CD14-positive monocyte (primary cell): ENCODE measurements at regions of chr22 and their contacts with region 1.

Region 1: DNA sequence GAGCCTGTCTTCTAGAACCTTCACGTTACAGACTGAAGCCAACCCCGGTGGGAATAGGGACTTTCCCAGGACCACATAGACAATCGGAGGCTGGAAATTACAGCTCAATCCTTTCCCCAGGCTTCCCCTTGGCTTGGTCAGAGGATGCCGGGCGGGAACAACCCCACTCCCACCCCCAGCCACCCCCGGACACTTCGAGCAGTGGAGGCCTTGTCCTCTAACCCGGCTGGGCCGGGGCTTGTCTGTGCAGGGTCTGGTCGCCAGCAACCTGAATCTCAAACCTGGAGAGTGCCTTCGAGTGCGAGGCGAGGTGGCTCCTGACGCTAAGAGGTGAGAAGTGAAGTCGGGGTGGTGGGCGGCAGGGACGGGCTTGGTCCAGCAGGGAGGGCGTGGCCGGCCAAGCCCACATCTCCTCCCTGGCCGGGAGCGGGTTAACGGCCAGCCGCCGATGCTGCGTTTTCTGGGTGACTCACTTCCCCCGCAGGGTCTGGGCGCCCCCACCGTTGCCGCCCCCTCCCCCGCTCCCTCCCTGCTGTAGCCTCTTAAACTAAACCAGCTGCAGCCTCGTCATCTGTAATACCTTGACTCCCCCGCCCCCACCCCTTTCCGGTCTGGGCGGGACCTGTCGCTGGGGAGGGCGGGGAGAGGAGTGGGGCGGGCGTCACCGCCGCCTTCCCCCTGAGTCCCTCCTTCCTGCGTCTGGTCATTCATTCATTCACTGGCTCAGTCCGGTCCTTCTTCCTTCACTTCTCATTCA is 1.5 kb downstream of the LGALS1 start:
- DNase-seq: peak; percentile 92 to 95 (median 94)
- H3K4me3 ChIP-seq: peak overlapping the region; percentile 62 to 98 (median 76)
- H3K4me3 Mint-ChIP-seq: peak overlapping the region; percentile 78 to 96
- H3K27ac ChIP-seq: peak overlapping the region; percentile 80 to 91
- H3K27ac Mint-ChIP-seq: peak overlapping the region; percentile 91 to 99 (median 95)
- H3K4me1 ChIP-seq: peaks cover 68 to 77% of the 10 kb centered on the region in 2 donors
- H3K4me1 Mint-ChIP-seq: peaks cover 53% of the 10 kb centered on the region
- H3K27me3 ChIP-seq: no peaks in the 10 kb centered on the region
- H3K27me3 Mint-ChIP-seq: peaks cover 0 to 2% (median 0%) of the 10 kb centered on the region in 3 donors
- CTCF ChIP-seq: no peak

Region 2: GRCh38 chr22:37098976-37099591 is 577.8 kb before region 1 on chr22:
- intact Hi-C with region 1: no loop called
- DNase-seq: no peak
- H3K4me3 ChIP-seq: no peak overlapping the region
- H3K4me3 Mint-ChIP-seq: no peak overlapping the region
- H3K27ac ChIP-seq: no peak overlapping the region
- H3K27ac Mint-ChIP-seq: peak overlapping the region in 1 of 7 donors; percentile 52
- H3K4me1 ChIP-seq: no peaks in the 10 kb centered on the region
- H3K4me1 Mint-ChIP-seq: no peaks in the 10 kb centered on the region
- H3K27me3 ChIP-seq: peaks cover 0 to 2% of the 10 kb centered on the region in 2 donors
- H3K27me3 Mint-ChIP-seq: peaks cover 7 to 38% (median 18%) of the 10 kb centered on the region in 3 donors
- CTCF ChIP-seq: no peak

Region 3: GRCh38 chr22:37300551-37301017 is 376.3 kb before region 1 on chr22:
- intact Hi-C with region 1: no loop called
- DNase-seq: peak; percentile 71 to 77 (median 75)
- H3K4me3 ChIP-seq: peak overlapping the region in 1 of 3 experiments; percentile 38
- H3K4me3 Mint-ChIP-seq: peak overlapping the region; percentile 24 to 70
- H3K27ac ChIP-seq: peak overlapping the region; percentile 73 to 96
- H3K27ac Mint-ChIP-seq: peak overlapping the region; percentile 91 to 99 (median 97)
- H3K4me1 ChIP-seq: peaks cover 100% of the 10 kb centered on the region in 2 donors
- H3K4me1 Mint-ChIP-seq: peaks cover 94% of the 10 kb centered on the region
- H3K27me3 ChIP-seq: no peaks in the 10 kb centered on the region
- H3K27me3 Mint-ChIP-seq: peaks cover 0 to 4% (median 2%) of the 10 kb centered on the region in 3 donors
- CTCF ChIP-seq: no peak

Region 4: DNA sequence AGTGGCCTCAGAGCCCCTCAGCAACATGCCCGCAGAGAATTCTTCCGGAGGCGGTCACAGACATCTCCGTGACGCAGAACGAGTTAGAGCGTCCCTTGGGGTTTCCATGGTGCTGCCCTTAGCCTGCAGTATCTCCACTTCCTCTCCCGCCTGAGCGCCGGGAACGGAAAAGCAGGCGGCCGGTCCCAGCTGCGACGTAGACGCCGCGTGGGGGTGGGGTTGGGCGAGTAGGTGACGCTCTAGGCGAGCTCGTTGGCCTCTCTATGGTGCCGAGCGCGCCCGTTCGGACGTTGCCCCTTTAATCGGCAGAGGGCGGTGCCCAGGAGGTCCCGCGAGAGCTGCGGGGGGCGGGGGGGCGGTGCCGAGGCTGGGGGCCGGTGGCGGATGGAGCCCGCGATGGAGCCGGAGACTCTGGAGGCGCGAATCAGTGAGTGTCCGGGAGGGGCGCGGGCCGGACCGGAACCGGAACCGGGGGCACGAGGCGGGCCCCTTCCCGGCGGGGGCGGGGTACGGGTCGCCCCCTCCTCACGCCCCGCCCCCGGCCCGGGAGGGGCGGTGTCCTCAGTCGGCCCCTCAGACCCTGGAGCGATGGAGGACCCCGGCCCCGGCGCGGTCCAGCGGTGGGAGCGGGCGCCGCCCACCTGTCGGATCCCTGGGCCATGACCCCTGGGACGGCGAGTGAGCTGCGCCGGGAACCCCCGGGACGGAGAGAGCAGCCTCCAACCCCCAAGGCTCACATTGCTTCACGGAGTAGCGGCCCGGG is 68.3 kb before region 1 on chr22 and contains the start of gene GGA1:
- intact Hi-C with region 1: loop called in 1 of 2 experiments (anchors 2 kb)
- DNase-seq: peak; percentile 100
- H3K4me3 ChIP-seq: peak within 1 kb of the TSS; percentile 60 to 81 (median 68)
- H3K4me3 Mint-ChIP-seq: peak within 1 kb of the TSS; percentile 97
- H3K27ac ChIP-seq: peak within 1 kb of the TSS; percentile 91 to 93
- H3K27ac Mint-ChIP-seq: peak within 1 kb of the TSS; percentile 97 to 99 (median 98)
- H3K4me1 ChIP-seq: peaks cover 42 to 45% of the 10 kb centered on the region in 2 donors
- H3K4me1 Mint-ChIP-seq: peaks cover 53% of the 10 kb centered on the region
- H3K27me3 ChIP-seq: no peaks in the 10 kb centered on the region
- H3K27me3 Mint-ChIP-seq: peaks cover 7 to 16% (median 7%) of the 10 kb centered on the region in 3 donors
- CTCF ChIP-seq: no peak
- polyA plus RNA-seq, gene GGA1: 19.8 to 91.0 (median 24.8) TPM

Region 5: GRCh38 chr22:37643225-37643847 is 33.6 kb before region 1 on chr22:
- intact Hi-C with region 1: loop called (anchors 1 to 2 kb)
- DNase-seq: peak; percentile 59 to 79 (median 73)
- H3K4me3 ChIP-seq: no peak overlapping the region
- H3K4me3 Mint-ChIP-seq: peak overlapping the region in 1 of 2 donors; percentile 53
- H3K27ac ChIP-seq: peak overlapping the region in 1 of 2 donors; percentile 43
- H3K27ac Mint-ChIP-seq: peak overlapping the region in 6 of 7 donors; percentile 31 to 84 (median 78)
- H3K4me1 ChIP-seq: peaks cover 40 to 47% of the 10 kb centered on the region in 2 donors
- H3K4me1 Mint-ChIP-seq: peaks cover 39% of the 10 kb centered on the region
- H3K27me3 ChIP-seq: no peaks in the 10 kb centered on the region
- H3K27me3 Mint-ChIP-seq: peaks cover 0 to 5% (median 0%) of the 10 kb centered on the region in 3 donors
- CTCF ChIP-seq: peak; percentile 95

Region 6: DNA sequence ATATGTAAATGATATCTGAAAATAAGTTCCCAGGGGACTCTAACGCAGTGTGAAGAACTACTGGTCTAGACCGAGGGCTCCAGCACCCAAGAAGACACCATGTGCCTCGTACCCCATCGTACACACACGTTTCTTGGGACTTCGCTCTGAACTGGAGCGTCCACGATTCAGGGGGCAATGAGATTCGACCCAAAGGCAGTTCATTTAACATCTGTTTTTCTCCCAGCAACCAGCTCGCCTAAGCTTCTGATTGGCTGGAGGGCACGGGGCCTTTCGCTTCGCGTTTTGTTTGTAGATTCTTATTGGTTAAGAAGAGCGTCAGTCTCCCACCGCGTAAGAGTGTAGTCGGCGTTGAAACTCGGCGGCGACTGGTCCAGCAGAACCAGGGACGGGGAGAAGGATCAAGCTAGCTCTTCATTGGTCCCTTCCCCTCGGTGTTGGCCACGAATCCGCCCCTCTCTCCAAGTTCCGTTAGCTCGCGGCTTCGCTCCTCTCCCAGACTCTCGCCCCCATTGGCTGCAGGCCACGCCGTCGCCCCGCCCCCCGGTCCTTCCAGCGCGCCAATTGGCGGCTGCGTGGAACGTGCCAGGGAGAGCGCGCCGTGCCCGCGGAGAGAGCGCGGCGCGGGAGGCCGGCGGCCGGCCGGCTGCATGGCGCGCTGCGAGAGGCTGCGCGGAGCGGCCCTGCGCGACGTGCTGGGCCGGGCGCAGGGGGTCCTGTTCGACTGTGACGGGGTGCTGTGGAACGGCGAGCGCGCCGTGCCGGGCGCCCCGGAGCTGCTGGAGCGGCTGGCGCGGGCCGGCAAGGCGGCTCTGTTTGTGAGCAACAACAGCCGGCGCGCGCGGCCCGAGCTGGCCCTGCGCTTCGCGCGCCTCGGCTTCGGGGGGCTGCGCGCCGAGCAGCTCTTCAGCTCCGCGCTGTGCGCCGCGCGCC is 18.5 kb before region 1 on chr22 and contains the start of gene PDXP:
- intact Hi-C with region 1: loop called in 1 of 2 experiments (anchors 2 kb)
- DNase-seq: peak; percentile 99
- H3K4me3 ChIP-seq: peak within 1 kb of the TSS; percentile 26 to 71 (median 43)
- H3K4me3 Mint-ChIP-seq: peak within 1 kb of the TSS; percentile 82 to 88
- H3K27ac ChIP-seq: peak within 1 kb of the TSS; percentile 47 to 76
- H3K27ac Mint-ChIP-seq: peak within 1 kb of the TSS; percentile 77 to 96 (median 95)
- H3K4me1 ChIP-seq: peaks cover 42 to 51% of the 10 kb centered on the region in 2 donors
- H3K4me1 Mint-ChIP-seq: peaks cover 44% of the 10 kb centered on the region
- H3K27me3 ChIP-seq: no peaks in the 10 kb centered on the region
- H3K27me3 Mint-ChIP-seq: peaks cover 0 to 4% (median 0%) of the 10 kb centered on the region in 3 donors
- CTCF ChIP-seq: no peak
- polyA plus RNA-seq, gene PDXP: 1.0 to 4.7 (median 4.3) TPM

Region 7: DNA sequence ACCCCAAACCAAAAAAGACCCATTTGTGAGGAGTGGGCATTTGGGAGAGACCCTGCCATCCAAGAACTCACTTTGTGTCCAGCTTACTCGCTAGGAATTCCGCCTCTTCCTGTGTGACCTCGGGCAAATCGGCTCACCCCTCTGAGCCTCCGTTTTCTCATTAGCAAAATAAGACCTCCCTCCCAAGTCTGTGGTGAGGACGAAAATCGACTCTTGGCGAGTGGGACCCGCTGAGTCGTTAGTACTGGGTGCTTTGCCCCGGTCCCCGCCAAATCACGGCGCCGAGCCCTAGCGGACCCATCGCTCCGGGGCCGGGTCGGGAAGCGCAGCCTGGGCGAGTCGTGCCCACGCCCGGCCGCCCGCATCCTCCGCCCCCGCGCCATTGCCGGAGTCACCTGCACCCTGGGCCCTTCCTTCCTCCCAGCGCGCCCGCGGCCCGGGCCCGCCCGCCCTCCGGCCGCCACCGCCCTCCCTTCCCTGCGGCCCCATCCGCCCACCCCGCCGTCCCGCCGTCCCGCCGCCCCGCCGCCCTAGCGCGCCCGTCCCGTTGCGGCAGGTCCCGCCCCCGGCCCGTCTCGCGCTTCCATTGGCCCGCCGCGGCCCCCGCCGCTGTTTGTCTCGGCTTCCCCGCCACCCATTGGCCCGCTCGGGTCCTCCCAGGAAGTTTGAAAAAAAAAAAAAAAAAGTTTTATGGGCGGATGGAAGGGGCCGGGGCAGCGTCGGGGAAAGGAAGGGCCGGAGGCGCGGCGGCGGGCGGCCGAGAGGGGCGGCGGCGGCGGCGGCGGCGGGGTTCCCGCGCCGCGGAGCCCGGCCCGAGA is 68.8 kb after region 1 on chr22:
- intact Hi-C with region 1: loop called in 1 of 2 experiments (anchors 10 kb)
- DNase-seq: peak; percentile 77 to 84 (median 81)
- H3K4me3 ChIP-seq: peak overlapping the region; percentile 77 to 96 (median 95)
- H3K4me3 Mint-ChIP-seq: peak overlapping the region; percentile 85 to 95
- H3K27ac ChIP-seq: peak overlapping the region; percentile 37 to 84
- H3K27ac Mint-ChIP-seq: peak overlapping the region; percentile 63 to 94 (median 86)
- H3K4me1 ChIP-seq: peaks cover 60 to 73% of the 10 kb centered on the region in 2 donors
- H3K4me1 Mint-ChIP-seq: peaks cover 67% of the 10 kb centered on the region
- H3K27me3 ChIP-seq: no peaks in the 10 kb centered on the region
- H3K27me3 Mint-ChIP-seq: no peaks in the 10 kb centered on the region
- CTCF ChIP-seq: no peak

Region 8: DNA sequence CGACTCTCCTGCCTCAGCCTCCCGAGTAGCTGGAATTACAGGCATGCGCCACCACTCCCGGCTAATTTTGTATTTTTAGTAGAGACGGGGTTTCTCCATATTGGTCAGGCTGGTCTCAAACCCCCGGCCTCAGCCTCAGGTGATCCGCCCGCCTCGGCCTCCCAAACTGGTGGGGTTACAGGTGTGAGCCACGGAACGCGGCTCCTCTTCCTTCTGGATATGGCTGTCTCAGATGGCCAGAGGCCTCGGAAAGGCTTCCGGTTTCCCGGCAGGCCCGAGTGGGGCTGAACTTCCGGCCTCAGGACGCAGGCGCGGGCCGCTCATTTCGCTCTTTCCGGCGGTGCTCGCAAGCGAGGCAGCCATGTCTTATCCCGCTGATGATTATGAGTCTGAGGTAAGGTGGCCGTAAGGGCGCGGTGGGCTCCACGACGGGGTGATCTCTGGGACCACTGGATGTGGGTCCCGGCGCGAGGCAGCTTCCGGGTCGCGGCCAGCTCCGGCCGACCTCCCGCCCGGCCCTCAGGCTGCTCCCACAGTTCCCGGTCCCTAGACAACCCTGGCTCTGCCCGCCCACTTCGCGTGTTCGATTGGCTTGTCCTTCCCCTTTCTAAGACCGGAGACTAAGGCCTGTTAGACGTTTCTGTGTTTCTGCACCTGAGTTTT is 172.3 kb after region 1 on chr22 and contains the start of gene EIF3L:
- intact Hi-C with region 1: loop called in 1 of 2 experiments (anchors 10 kb)
- DNase-seq: peak; percentile 80 to 88 (median 87)
- H3K4me3 ChIP-seq: peak within 1 kb of the TSS; percentile 54 to 95 (median 82)
- H3K4me3 Mint-ChIP-seq: peak within 1 kb of the TSS; percentile 91 to 95
- H3K27ac ChIP-seq: peak within 1 kb of the TSS; percentile 78 to 89
- H3K27ac Mint-ChIP-seq: peak within 1 kb of the TSS; percentile 94 to 98 (median 96)
- H3K4me1 ChIP-seq: peaks cover 17 to 19% of the 10 kb centered on the region in 2 donors
- H3K4me1 Mint-ChIP-seq: peaks cover 21% of the 10 kb centered on the region
- H3K27me3 ChIP-seq: no peaks in the 10 kb centered on the region
- H3K27me3 Mint-ChIP-seq: no peaks in the 10 kb centered on the region
- CTCF ChIP-seq: no peak
- polyA plus RNA-seq, gene EIF3L: 209 to 503 (median 246) TPM